Colonic mucosa (tissue), 4 donors: ENCODE measurements at regions of chr19 and their contacts with region 1.

Region 1: GRCh38 chr19:44304659-44305193 is at the start of gene ZNF235:
- DNase-seq: peak; percentile 94
- H3K4me3 ChIP-seq: peak within 1 kb of the TSS; percentile 73
- H3K27ac ChIP-seq: peak within 1 kb of the TSS; percentile 56
- H3K4me1 ChIP-seq: no peaks in the 10 kb centered on the region
- H3K27me3 ChIP-seq: no peaks in the 10 kb centered on the region
- CTCF ChIP-seq: no peak
- total RNA-seq, gene ZNF235: 3.1 to 5.4 TPM

Region 2: DNA sequence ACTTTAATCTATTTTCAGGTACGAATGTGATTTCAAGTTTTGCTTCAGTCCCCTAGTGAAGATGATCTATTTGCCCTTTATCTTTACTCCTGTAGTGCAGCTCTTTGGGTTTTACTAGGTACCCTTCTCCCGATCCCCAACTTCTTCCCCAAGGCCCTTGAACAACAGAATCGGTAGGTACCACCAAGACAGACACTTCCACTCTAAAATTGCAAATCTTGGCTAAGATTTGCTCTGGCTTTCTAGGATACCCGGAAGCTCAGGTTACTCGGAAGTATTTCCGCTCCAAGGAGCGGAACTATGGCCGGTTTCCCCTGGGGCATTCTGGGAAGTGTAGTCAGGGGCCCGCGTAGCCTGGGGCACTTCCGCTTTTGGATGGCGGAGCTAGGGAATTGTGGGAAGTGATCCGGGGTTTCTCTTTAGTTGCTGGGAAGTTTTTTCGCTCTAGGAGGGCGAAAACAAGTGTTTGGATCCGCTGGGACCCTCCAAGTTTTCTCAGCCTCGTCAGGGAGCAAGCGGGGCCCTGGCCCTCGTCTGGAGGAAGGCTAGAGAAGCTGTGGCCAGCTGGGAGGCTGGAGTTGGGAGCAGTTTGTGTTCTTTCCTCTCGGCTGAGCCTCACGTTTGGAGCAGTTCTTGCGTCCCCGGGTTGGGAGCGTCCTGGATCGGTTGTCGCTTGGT is 97.5 kb before region 1 on chr19:
- intact Hi-C with region 1: loop called (anchors 5 kb)
- DNase-seq: peak; percentile 94
- H3K4me3 ChIP-seq: peak overlapping the region; percentile 61
- H3K27ac ChIP-seq: peak overlapping the region; percentile 69
- H3K4me1 ChIP-seq: no peaks in the 10 kb centered on the region
- H3K27me3 ChIP-seq: no peaks in the 10 kb centered on the region
- CTCF ChIP-seq: no peak